ENCODE measurements at regions of chr6 and their contacts with region 1.

Region 1: DNA sequence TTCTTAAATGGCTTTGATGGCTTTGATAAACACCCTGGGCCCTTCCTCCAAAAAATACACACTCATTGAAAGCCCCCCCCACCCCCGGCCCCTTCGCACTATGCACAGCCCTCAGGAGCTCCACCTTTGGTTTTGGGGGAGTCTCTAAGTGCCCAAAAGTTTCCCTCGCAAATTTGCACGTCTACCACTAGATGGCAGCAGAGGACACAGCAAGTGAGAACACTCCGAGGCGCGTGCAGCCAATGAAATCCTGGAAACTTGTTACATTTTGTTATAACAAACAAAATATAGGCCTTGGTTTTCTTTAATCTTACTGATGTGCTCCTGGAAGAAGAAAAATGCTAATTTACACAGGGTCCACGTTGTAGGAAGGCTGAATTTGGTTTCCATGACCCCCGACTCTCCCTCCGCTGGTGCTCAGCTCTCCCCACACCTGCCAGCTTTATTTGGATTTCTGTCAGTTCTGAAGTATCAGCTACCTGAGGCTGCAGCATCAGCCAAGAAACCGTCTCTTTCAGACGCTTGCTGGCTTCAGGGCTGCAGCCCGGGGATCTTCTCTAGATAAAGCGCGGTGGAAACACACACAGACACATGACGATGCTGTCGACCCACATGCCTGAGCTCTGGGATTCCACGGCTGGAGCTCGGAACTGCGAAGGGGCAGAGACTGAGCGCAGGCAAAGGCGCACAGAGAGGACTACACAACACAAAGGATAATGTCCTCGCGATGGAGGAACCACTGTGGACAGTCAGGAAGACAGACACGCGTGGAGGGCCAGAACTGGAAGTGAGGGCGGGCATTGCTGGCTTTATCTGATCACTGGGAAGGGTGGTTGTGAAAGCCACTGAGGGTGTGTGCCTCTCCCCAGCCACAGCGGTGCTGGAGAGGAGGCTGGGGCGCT is 148.4 kb upstream of the RPS6KA2 start:
- DNase-seq: peak in 1 of 2 donors; percentile 48
- ATAC-seq: peak; percentile 48

Region 2: DNA sequence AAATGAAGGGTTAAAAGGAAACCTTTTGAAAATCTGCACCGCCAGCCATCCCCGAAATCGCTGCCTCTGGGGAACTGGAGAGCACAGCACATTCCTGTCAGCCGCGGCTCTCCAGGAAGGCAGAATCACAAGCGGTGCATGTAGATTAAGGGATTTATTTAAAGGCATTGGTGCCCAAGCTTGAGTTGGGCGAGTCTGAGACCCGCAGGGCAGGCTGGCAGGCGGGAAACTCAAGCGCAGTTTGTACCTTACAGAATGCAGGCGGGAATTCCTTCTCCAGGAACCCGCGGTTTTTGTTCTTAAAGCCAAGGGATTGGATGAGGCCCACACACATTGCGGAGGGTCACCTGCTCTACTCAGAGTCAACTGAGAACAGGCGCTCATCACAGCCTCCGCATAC is 371.5 kb after region 1 on chr6:
- intact Hi-C with region 1: loop called in 1 of 2 experiments (anchors 5 kb)
- DNase-seq: no peak
- ATAC-seq: no peak

Measured in left colon (tissue), 2 donors.